GM12878 (cell line): ENCODE measurements at regions of chr10 and their contacts with region 1.

Region 1: DNA sequence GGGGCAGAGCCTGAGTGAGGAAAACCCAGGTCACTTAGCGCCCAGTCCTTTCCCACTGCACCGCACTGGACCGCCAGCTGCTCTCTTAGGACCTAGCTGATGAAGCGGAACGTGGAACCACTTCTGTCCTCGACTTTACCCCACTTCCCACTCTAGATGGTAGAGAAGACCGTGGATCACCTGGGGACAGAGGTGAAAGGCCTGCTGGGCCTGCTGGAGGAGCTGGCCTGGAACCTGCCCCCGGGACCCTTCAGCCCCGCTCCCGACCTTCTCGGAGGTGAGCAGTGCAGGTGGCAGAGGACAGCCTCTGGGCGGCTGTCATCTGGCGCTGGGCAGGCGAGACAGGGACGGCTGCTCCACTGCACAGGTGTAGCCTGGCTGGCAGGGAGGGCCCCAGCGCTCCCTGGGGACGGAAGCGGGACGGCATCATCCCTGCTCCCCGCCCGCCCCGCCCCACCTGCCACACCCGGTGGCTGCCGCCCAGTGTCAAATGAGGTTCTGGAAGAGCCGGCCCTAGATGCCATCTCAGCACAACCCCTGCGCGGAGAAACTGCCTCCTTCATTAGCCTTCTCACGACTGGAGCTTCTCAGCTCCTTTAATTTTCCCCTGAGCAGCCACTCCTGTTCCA is 11.7 kb downstream of the PLAC9 start:
- DNase-seq: no peak
- ATAC-seq: peak; percentile 75
- H3K4me3 ChIP-seq: no peak overlapping the region
- H3K27ac ChIP-seq: no peak overlapping the region
- H3K4me1 ChIP-seq: peaks cover 7% of the 10 kb centered on the region
- H3K27me3 ChIP-seq: no peaks in the 10 kb centered on the region; a peak in 1 of 4 replicates
- CTCF ChIP-seq: no peak
- EP300 ChIP-seq: no peak
- POLR2A ChIP-seq: no peak
- RAD21 ChIP-seq: no peak

Region 2: DNA sequence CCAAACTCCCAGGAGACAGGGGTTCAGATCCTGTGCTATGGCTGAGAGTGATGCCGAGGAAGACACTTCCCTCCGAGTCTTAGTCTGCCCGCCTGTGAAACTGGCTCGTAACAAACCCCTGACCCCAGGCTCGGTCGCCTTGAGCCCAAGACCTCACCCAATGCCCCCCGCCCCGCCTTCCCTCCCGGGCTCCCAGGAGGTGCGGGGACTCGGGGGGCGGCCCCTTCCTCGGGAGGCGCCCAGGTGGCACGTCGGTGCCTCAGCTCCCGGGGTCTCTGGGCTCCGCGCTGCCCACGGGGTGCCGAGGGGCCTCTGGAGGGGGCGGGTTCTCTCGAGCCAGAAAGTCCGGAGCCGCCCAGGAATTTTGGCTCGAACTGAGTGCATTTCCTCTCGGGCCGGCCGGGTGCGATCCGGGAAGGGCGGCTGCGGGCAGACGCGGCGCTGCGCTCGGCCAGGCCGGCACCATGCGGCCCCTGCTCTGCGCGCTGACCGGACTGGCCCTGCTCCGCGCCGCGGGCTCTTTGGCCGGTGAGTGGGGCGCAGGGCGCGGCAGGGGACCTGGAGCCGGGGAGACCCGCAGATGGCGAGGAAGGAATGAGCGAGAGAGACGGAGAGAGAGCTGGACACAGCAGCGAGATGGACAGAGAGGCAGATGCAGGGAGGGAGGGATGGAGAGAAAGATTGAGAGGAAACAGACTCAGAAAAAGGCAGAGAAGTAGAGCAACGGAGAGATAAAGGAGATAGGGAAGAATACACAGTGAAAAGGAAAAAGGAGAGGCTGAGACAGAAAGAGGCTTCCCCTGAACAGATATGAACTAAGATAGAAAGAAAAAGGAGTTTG is 11.7 kb before region 1 on chr10 and contains the start of gene PLAC9:
- CTCF ChIA-PET with region 1: no interaction called
- POLR2A ChIA-PET with region 1: no interaction called
- RAD21 ChIA-PET with region 1: no interaction called
- SMC1A ChIA-PET with region 1: no interaction called
- in situ Hi-C with region 1: no loop called
- intact Hi-C with region 1: no loop called
- DNase-seq: no peak
- ATAC-seq: no peak
- H3K4me3 ChIP-seq: no peak within 1 kb of the TSS
- H3K27ac ChIP-seq: no peak within 1 kb of the TSS
- H3K4me1 ChIP-seq: no peaks in the 10 kb centered on the region
- H3K27me3 ChIP-seq: peaks cover 3 to 7% of the 10 kb centered on the region in 2 experiments; a peak in 3 of 4 replicates
- CTCF ChIP-seq: no peak
- EP300 ChIP-seq: no peak
- POLR2A ChIP-seq: no peak
- RAD21 ChIP-seq: no peak
- polyA plus RNA-seq, gene PLAC9: not detected

Region 3: DNA sequence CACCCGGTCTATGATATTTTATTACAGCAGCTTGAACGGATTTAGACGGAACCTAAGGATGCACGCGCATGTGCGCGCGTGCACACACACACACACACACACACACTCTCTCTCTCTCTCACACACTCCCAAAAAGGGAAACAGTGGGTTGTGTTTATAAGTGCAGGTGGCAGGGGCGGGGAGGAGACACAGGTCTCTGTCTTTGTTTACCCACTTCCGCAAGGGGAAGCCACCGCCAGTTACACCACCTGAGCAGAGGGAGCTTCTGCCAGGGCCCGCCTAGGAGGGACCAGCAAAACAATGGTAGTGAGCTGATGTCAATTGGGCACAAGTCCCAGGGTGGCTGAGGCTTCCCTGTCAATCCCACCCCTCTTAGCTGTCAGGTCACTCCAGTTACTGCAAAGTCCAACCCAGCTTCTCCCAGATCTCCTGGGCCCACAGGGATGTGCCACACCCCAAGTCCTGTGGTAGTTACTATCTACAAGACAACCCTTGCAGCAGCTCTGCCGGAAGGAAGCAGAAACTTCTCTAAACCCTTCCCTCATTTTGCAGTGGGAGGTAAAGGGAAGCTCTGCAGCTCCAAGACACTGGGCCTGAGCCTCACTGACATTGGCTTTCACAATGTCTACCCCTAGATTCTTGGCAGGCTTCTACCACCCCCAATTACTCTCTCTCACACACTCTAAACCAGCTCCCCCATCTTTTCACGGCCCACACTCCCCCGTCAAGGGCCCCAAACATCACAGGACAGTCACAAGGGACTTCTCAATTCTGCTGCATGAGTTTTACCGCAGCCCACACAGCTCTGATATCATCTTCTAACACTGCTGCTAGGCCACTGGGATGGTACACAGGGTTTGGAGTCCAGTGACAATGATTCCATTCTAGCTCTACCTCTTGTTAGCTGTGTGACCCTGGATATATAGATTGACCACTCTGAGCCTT is 43.6 kb after region 1 on chr10:
- CTCF ChIA-PET with region 1: interaction called, 11 read pairs
- POLR2A ChIA-PET with region 1: no interaction called
- RAD21 ChIA-PET with region 1: no interaction called
- SMC1A ChIA-PET with region 1: interaction called, 7 read pairs
- in situ Hi-C with region 1: no loop called
- intact Hi-C with region 1: no loop called
- DNase-seq: peak; percentile 56
- ATAC-seq: peak; percentile 94
- H3K4me3 ChIP-seq: peak overlapping the region; percentile 28; the same call in 1 of the 2 replicates
- H3K27ac ChIP-seq: peak overlapping the region; percentile 69
- H3K4me1 ChIP-seq: peaks cover 22% of the 10 kb centered on the region
- H3K27me3 ChIP-seq: no peaks in the 10 kb centered on the region
- CTCF ChIP-seq: no peak
- EP300 ChIP-seq: peak; percentile 51 to 80; a peak in 1 of 4 replicates
- POLR2A ChIP-seq: peak; percentile 39; the same call in 1 of the 2 replicates
- RAD21 ChIP-seq: no peak

Region 4: GRCh38 chr10:80205478-80206276 is 61.5 kb after region 1 on chr10 and contains the start of gene ANXA11:
- CTCF ChIA-PET with region 1: interaction called, 9 read pairs
- POLR2A ChIA-PET with region 1: no interaction called
- RAD21 ChIA-PET with region 1: interaction called, 14 read pairs
- SMC1A ChIA-PET with region 1: interaction called, 6 read pairs
- in situ Hi-C with region 1: no loop called
- intact Hi-C with region 1: no loop called
- DNase-seq: peak; percentile 27
- ATAC-seq: peak; percentile 84
- H3K4me3 ChIP-seq: peak within 1 kb of the TSS; percentile 68
- H3K27ac ChIP-seq: peak within 1 kb of the TSS; percentile 95
- H3K4me1 ChIP-seq: peaks cover 12% of the 10 kb centered on the region
- H3K27me3 ChIP-seq: no peaks in the 10 kb centered on the region
- CTCF ChIP-seq: no peak
- EP300 ChIP-seq: 0 out of 4 replicates have a peak, but pooled peaks of 1 of the 2 experiments have one; percentile 36
- POLR2A ChIP-seq: peak; percentile 94
- RAD21 ChIP-seq: no peak
- polyA plus RNA-seq, gene ANXA11: 25.0 to 67.7 TPM

Region 5: GRCh38 chr10:80211786-80212185 is 67.6 kb after region 1 on chr10:
- CTCF ChIA-PET with region 1: interaction called, 3 read pairs
- POLR2A ChIA-PET with region 1: no interaction called
- RAD21 ChIA-PET with region 1: interaction called, 3 read pairs
- SMC1A ChIA-PET with region 1: interaction called, 77 read pairs
- in situ Hi-C with region 1: no loop called
- intact Hi-C with region 1: no loop called
- DNase-seq: no peak
- ATAC-seq: no peak
- H3K4me3 ChIP-seq: no peak overlapping the region
- H3K27ac ChIP-seq: no peak overlapping the region
- H3K4me1 ChIP-seq: no peaks in the 10 kb centered on the region
- H3K27me3 ChIP-seq: no peaks in the 10 kb centered on the region; a peak in 1 of 4 replicates
- CTCF ChIP-seq: no peak
- EP300 ChIP-seq: no peak
- POLR2A ChIP-seq: no peak
- RAD21 ChIP-seq: no peak

Region 6: GRCh38 chr10:80253266-80254245 is 109.4 kb after region 1 on chr10:
- CTCF ChIA-PET with region 1: interaction called, 20 read pairs
- POLR2A ChIA-PET with region 1: no interaction called
- RAD21 ChIA-PET with region 1: interaction called, 7 read pairs
- SMC1A ChIA-PET with region 1: interaction called, 6 read pairs
- in situ Hi-C with region 1: no loop called
- intact Hi-C with region 1: no loop called
- DNase-seq: peak; percentile 11
- ATAC-seq: no peak; the same call in 2 of the 3 replicates
- H3K4me3 ChIP-seq: no peak overlapping the region
- H3K27ac ChIP-seq: no peak overlapping the region
- H3K4me1 ChIP-seq: peaks cover 8% of the 10 kb centered on the region
- H3K27me3 ChIP-seq: no peaks in the 10 kb centered on the region; a peak in 1 of 4 replicates
- CTCF ChIP-seq: no peak
- EP300 ChIP-seq: no peak
- POLR2A ChIP-seq: no peak
- RAD21 ChIP-seq: no peak

Region 7: GRCh38 chr10:80260295-80261243 is 116.4 kb after region 1 on chr10:
- CTCF ChIA-PET with region 1: interaction called, 20 read pairs
- POLR2A ChIA-PET with region 1: no interaction called
- RAD21 ChIA-PET with region 1: interaction called, 4 read pairs
- SMC1A ChIA-PET with region 1: interaction called, 4 read pairs
- in situ Hi-C with region 1: no loop called
- intact Hi-C with region 1: loop called (anchors 1 kb)
- DNase-seq: no peak
- ATAC-seq: peak; percentile 74
- H3K4me3 ChIP-seq: no peak overlapping the region
- H3K27ac ChIP-seq: no peak overlapping the region
- H3K4me1 ChIP-seq: no peaks in the 10 kb centered on the region
- H3K27me3 ChIP-seq: peaks cover 0 to 3% of the 10 kb centered on the region in 2 experiments; a peak in 1 of 4 replicates
- CTCF ChIP-seq: peak; percentile 83 to 94 (median 85)
- EP300 ChIP-seq: no peak
- POLR2A ChIP-seq: no peak
- RAD21 ChIP-seq: peak; percentile 71